Activated naive CD4-positive, alpha-beta T cell treated with anti-CD3 and anti-CD28 coated beads for 36 hours (primary cell): ENCODE measurements at regions of chr4 and their contacts with region 1.

Region 1: DNA sequence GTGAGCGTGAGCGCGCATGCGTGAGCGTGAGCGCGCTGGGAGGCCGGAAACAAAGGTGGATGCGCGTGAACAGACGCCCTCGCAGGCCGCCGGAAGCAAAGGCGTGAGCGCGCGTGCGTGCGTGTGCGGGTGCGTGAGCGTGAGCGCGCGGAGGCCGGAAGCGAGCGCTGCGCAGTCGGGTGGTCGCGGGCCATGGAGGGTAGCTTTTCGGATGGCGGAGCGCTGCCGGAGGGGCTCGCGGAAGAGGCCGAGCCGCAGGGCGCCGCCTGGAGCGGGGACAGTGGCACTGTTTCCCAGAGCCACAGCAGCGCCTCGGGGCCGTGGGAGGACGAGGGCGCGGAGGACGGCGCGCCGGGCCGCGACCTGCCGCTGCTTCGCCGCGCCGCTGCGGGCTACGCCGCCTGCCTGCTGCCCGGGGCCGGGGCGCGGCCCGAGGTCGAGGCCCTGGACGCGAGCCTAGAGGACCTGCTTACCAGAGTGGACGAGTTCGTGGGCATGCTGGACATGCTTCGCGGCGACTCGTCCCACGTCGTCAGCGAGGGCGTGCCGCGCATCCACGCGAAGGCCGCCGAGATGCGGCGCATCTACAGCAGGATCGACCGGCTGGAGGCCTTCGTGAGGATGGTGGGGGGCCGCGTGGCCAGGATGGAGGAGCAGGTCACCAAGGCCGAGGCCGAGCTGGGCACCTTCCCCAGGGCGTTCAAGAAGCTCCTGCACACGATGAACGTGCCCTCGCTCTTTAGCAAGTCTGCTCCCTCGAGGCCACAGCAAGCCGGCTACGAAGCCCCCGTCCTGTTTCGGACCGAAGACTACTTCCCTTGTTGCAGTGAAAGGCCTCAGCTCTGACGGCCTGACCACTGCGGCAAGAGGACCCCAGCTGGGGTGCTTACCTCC is at the start of gene BLOC1S4:
- DNase-seq: peak; percentile 88
- H3K4me3 Mint-ChIP-seq: peak within 1 kb of the TSS; percentile 96
- H3K27ac Mint-ChIP-seq: peak within 1 kb of the TSS; percentile 95
- H3K4me1 Mint-ChIP-seq: peaks cover 26% of the 10 kb centered on the region
- H3K27me3 Mint-ChIP-seq: no peaks in the 10 kb centered on the region
- total RNA-seq, gene BLOC1S4: 11.0 to 11.8 TPM

Region 2: GRCh38 chr4:6128221-6128850 is 587.9 kb before region 1 on chr4:
- CTCF ChIA-PET with region 1: no interaction called
- intact Hi-C with region 1: no loop called
- DNase-seq: no peak
- H3K4me3 Mint-ChIP-seq: no peak overlapping the region
- H3K27ac Mint-ChIP-seq: no peak overlapping the region
- H3K4me1 Mint-ChIP-seq: no peaks in the 10 kb centered on the region
- H3K27me3 Mint-ChIP-seq: peaks cover 3% of the 10 kb centered on the region

Region 3: DNA sequence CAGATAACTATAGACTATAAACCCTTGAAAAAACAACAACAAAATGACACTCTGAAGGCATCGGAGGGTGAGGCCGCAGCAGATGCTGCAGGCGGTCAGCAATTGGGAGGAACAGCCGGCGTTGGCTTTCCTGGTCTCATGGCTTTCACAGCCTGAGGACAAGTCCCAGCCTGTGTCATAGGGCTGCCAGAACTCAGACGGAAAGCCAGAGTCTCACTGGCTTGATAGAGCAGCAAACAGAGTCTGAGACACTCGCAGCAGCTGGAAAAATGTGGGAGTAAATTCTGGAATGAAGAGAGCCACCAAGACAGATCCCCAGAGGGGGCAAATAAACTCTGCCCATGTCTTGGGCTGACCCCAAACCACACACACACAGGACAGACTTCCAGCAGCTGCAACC is 330.2 kb before region 1 on chr4:
- CTCF ChIA-PET with region 1: no interaction called
- intact Hi-C with region 1: no loop called
- DNase-seq: no peak
- H3K4me3 Mint-ChIP-seq: no peak overlapping the region
- H3K27ac Mint-ChIP-seq: no peak overlapping the region
- H3K4me1 Mint-ChIP-seq: no peaks in the 10 kb centered on the region
- H3K27me3 Mint-ChIP-seq: peaks cover 9% of the 10 kb centered on the region

Region 4: DNA sequence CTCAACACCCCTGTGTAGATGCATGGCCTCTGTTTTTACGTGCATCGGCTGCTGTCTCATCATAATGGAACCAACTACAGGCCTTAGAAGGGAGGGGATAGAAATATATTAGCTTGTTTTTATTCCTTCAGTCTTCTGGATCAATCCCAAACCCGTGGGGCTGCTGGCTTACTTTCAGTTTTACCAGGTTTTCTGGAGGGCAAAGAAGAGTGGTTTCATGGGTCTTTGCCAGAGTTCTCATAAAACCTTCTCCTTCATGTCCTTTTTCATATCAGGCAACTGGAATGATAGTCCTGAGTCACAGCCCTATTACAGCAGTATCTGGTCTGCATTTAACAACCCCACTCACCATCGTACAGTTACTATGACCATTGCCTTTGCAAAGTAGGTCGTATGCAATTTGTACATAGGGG is 278.4 kb before region 1 on chr4:
- CTCF ChIA-PET with region 1: no interaction called
- intact Hi-C with region 1: no loop called
- DNase-seq: no peak
- H3K4me3 Mint-ChIP-seq: no peak overlapping the region
- H3K27ac Mint-ChIP-seq: no peak overlapping the region
- H3K4me1 Mint-ChIP-seq: no peaks in the 10 kb centered on the region
- H3K27me3 Mint-ChIP-seq: peaks cover 5% of the 10 kb centered on the region

Region 5: DNA sequence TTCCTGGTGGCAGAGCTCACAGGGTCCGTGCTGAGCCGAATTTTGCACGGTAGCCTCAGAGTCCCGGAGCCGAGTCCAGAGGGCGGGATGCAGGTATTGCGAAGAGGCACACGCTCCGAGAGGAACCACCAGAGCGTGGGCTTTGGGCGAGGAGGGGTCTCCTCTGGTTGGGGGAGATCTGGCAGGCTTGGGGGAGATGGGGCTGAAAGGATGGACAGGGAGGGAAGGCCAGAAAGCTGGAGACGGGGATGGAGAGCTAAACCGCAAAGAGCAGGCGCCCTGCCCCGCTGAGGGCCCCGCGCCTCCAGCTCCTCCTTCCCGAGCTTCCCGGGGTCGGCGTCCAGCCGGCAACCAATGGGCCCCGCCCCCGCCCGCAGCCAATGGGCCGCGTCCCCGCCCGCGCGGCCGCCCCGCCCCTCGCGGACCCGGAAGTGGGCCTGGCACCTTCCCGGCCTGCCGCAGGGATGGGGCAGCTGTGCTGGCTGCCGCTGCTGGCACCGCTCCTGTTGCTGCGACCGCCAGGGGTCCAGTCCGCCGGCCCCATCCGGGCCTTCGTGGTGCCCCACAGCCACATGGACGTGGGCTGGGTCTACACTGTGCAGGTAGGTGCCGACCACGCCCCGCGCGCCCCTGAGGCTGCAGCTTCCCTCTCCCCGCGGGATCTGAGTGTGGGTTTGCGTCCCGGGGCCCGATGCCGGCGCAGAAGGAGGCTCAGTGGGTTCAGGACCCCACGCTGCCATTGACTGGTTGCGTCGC is 141.3 kb before region 1 on chr4 and contains the start of gene MAN2B2:
- CTCF ChIA-PET with region 1: no interaction called
- intact Hi-C with region 1: loop called (anchors 5 kb)
- DNase-seq: peak; percentile 83
- H3K4me3 Mint-ChIP-seq: peak within 1 kb of the TSS; percentile 84
- H3K27ac Mint-ChIP-seq: peak within 1 kb of the TSS; percentile 60
- H3K4me1 Mint-ChIP-seq: peaks cover 4% of the 10 kb centered on the region
- H3K27me3 Mint-ChIP-seq: no peaks in the 10 kb centered on the region
- total RNA-seq, gene MAN2B2: 12.7 to 12.8 TPM

Region 6: DNA sequence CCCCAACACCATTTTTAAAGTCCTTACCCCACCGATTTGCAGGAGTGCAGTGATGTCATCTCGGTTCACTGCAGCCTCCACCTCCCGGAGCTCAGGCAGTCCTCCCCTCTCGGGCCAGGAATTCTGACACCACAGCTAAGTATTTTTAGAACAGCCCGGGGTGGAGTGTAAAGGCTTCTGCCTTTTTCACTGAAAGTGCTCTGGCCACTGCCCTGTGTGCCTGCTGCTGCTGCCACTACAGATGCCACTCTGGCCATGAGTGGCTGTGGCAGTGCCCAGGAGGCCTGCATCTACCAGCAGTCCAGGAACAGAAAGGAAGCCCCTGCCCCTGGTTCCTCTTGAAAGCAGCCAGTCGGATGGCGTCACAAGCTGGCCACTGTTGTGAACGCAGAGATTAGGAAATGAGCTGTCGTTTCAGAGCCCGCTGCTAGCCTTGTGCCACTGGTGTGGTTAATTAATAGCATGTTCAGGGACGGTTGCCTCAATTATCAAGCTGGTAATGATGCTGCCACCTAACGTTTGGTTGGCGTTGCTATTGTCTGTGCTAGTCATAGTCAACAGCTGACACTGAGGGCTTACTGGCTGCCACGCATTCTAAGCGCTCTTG is 169.8 kb after region 1 on chr4:
- CTCF ChIA-PET with region 1: interaction called, 15 read pairs
- intact Hi-C with region 1: loop called (anchors 1 kb)
- DNase-seq: peak; percentile 57
- H3K4me3 Mint-ChIP-seq: no peak overlapping the region
- H3K27ac Mint-ChIP-seq: no peak overlapping the region
- H3K4me1 Mint-ChIP-seq: no peaks in the 10 kb centered on the region
- H3K27me3 Mint-ChIP-seq: no peaks in the 10 kb centered on the region